ENCODE measurements at regions of chr1 and their contacts with region 1.

Region 1: DNA sequence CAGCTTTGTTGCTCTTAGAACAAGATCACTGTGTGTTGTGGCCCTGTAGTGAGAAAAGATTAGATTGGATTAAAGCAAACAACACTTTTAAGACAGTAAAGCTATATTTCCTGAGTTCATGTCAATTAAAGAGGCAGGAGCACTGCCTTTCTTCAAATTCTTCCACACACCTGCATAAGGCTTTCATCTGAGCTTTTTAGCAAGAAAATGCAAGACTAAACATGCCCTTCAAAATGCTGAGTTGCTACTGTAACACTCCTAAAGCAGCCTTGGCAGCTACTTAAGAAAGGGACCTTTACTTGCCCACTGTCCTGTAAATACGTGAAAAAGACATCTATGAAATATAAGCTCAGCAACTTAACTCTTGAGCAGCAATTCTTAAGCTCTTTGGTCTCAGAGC is 11.8 kb downstream of the DPH5 start:
- DNase-seq: no peak
- H3K4me3 Mint-ChIP-seq: no peak overlapping the region
- H3K27ac Mint-ChIP-seq: no peak overlapping the region
- H3K4me1 Mint-ChIP-seq: peaks cover 9% of the 10 kb centered on the region
- H3K27me3 Mint-ChIP-seq: no peaks in the 10 kb centered on the region

Region 2: DNA sequence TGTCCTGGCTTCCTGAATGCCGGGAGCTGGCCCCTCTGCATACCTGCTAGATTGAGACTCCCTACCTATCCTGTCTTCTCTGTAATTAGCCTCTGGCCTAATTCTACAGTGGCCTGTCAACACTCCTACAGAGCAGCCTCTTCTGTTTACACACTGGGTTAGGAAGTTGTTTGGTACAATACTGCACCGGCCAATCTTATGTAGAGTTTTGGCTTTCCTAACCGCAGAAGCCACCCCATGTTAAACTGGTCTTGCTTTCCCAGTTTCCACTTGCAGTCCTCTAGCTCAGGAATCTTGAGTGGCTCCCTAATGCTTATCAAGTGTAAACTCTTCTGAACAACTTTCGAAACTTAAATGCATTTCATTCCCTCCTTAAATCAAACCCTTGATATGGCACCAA is 31.0 kb before region 1 on chr1:
- intact Hi-C with region 1: no loop called
- DNase-seq: no peak
- H3K4me3 Mint-ChIP-seq: no peak overlapping the region
- H3K27ac Mint-ChIP-seq: no peak overlapping the region
- H3K4me1 Mint-ChIP-seq: peaks cover 22% of the 10 kb centered on the region
- H3K27me3 Mint-ChIP-seq: no peaks in the 10 kb centered on the region

Region 3: DNA sequence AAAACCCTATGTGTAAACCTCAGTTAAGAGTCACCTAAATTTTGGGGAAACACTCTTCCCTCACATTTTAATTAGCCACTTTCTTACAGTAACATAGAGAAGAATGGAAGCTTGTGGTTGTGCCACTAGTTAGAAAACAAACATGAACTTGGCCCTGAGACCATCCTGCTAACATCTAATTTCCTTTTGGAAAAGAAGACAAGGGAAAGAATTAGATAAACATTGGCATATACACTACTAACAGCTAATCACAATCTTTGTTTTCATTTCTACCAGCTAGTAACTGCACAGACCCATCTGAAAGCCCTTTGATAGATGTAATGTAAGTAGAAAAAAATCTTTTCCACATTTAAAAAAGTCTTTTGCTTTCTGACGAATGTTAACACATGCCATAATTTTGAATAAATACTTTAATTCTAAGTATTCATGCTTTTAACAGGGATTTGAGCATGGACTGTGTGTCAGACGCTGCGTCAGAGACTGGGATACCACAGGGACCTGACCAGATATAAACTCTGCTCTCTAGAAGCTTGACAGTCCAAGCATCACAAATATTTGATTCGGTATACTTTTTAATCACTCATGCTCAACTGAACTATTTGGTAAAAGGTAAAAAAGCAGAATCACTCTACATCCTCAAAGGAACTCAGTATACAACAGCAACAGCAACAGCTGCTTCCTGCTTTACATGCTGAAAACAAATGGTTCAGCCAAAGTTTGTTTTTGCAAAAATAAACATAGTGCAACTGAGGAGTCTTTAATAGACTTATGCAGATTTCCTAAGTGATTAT is 18.4 kb before region 1 on chr1:
- intact Hi-C with region 1: loop called (anchors 2 kb)
- DNase-seq: no peak
- H3K4me3 Mint-ChIP-seq: no peak overlapping the region
- H3K27ac Mint-ChIP-seq: no peak overlapping the region
- H3K4me1 Mint-ChIP-seq: peaks cover 8% of the 10 kb centered on the region
- H3K27me3 Mint-ChIP-seq: no peaks in the 10 kb centered on the region